ENCODE measurements at regions of chr10 and their contacts with region 1.

Region 1: DNA sequence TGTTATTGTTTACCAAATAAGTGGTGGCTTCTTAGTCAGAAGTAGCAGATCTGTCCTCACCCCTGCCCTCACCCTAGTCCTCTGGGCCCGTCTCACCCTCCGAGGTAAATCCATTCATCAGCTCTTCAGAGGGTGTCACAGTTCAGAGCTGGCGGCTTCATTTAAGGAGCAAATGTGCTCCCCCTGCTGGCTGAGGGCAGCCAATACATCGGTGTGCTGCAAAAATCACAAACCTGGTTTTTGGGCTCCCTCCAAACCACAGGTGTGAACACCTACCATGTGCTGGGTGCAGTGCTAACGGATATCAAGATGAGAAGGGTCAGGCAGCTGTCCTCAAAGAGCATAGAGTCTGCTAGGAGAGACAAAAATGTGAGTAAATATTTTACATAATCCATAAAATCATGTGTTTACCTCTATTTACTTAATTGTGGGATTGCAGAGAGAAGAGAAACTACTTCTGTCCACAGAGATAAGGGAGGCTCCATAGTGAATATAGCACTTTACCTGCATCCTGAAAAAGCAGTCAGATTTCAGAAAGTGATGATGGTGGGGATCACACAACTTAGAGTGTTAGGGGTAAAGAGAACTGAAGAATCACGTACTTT is 15.5 kb upstream of the CRTAC1 start:
- DNase-seq: peak; percentile 52 to 76 (median 74)
- H3K4me3 ChIP-seq: no peak overlapping the region
- H3K27ac ChIP-seq: no peak overlapping the region
- H3K4me1 ChIP-seq: no peaks in the 10 kb centered on the region
- H3K27me3 ChIP-seq: peaks cover 4 to 49% (median 20%) of the 10 kb centered on the region in 5 experiments

Region 2: DNA sequence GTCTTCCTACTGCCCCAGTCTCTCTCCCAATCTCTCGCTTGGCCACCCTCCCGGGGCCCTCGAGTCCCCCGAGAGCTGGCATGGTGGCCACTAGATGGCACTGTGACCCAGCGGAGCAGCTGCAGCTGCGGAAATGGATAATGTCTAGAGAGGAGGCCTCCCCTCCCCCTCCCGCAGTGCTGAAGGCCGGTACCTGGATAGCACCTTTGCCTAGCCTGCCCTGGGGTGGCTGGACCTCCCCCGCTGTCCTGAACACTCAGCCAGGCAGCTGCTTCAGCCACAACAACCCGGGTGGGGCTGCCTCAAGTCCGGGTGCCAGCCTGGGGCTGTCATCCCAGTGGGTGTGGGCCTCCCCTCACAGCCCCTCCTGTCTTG is 131.1 kb before region 1 on chr10:
- CTCF ChIA-PET with region 1: interaction called, 86 read pairs
- POLR2A ChIA-PET with region 1: no interaction called
- DNase-seq: peak; percentile 50 to 69 (median 58)
- H3K4me3 ChIP-seq: no peak overlapping the region
- H3K27ac ChIP-seq: no peak overlapping the region
- H3K4me1 ChIP-seq: no peaks in the 10 kb centered on the region
- H3K27me3 ChIP-seq: peaks cover 0 to 56% (median 16%) of the 10 kb centered on the region in 5 experiments

Region 3: DNA sequence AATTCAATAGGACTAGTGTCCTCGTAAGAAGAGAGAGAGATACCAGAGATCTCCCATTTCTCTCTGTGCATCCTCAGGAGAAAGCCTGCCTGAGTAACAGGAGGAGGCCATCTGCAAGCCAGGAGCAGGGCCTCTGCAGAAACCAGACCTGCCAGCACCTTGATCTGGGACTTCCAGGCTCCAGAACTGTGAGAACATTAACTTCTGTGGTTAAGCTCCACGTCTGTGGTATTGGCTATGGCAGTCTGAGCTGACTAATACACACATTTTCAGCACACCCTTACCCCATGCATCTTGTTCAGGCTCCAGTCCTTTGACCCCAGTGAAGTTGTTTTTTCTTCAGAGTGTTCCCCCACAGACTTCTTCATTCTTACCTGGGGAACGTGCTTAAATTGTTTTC is 12.4 kb before region 1 on chr10:
- CTCF ChIA-PET with region 1: interaction called, 22 read pairs
- POLR2A ChIA-PET with region 1: no interaction called
- DNase-seq: no peak
- H3K4me3 ChIP-seq: no peak overlapping the region
- H3K27ac ChIP-seq: no peak overlapping the region
- H3K4me1 ChIP-seq: peaks cover 0 to 18% (median 8%) of the 10 kb centered on the region in 4 experiments
- H3K27me3 ChIP-seq: peaks cover 39 to 100% (median 54%) of the 10 kb centered on the region in 5 experiments

Region 4: GRCh38 chr10:98055875-98056516 is 10.1 kb after region 1 on chr10:
- CTCF ChIA-PET with region 1: interaction called, 39 read pairs
- POLR2A ChIA-PET with region 1: no interaction called
- DNase-seq: peak; percentile 14 to 52 (median 48)
- H3K4me3 ChIP-seq: no peak overlapping the region
- H3K27ac ChIP-seq: no peak overlapping the region
- H3K4me1 ChIP-seq: no peaks in the 10 kb centered on the region
- H3K27me3 ChIP-seq: peaks cover 2 to 33% (median 7%) of the 10 kb centered on the region in 5 experiments

Measured in common myeloid progenitor, CD34-positive (primary cell).